Activated naive CD4-positive, alpha-beta T cell treated with anti-CD3 and anti-CD28 coated beads for 36 hours (primary cell): ENCODE measurements at regions of chr2 and their contacts with region 1.

Region 1: DNA sequence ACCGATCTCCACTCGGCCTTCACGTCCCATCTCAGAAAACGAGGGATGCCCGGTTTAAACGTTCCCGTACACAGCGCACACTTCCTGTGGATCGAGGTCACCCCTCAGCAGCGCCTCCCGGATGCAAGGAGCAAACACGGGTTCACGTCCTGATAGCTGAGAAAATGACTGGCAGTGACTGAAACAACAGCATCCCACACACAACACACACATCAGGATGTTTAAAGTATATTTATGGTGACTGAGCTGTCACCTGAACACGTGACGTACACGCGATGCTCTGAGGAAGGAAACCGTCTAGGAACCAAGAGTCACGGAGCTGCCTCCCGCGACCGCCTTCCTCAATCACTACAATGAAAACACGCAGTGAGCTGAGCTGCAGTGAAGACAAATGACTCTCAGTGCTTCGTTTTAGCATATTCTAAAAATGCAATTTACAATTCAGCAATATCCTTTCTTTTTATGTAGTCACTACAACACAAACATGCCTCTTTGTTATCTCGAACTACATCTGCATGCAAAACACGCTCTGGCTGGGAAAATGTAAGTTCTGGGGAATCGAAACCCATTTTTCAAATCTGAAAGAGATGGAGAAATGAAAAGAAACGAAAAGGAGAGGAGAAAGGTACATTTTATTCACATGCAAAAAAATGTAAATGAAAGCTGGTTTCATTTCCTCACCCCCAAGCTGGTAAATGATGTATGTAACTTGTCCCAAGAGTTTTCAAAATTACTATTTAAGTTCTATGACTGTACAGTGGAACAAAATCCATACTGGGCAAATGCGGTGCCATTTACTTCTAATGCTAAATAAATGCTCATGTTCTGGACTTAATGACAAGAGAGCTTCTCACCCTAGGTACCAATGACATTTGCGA is 19.8 kb downstream of the HDAC4 start:
- DNase-seq: peak; percentile 85
- H3K4me3 Mint-ChIP-seq: peak overlapping the region; percentile 73
- H3K27ac Mint-ChIP-seq: peak overlapping the region; percentile 95
- H3K4me1 Mint-ChIP-seq: peaks cover 44% of the 10 kb centered on the region
- H3K27me3 Mint-ChIP-seq: no peaks in the 10 kb centered on the region

Region 2: GRCh38 chr2:239216614-239217273 is 164.3 kb before region 1 on chr2:
- CTCF ChIA-PET with region 1: no interaction called
- intact Hi-C with region 1: loop called (anchors 2 kb)
- DNase-seq: peak; percentile 72
- H3K4me3 Mint-ChIP-seq: peak overlapping the region; percentile 69
- H3K27ac Mint-ChIP-seq: peak overlapping the region; percentile 87
- H3K4me1 Mint-ChIP-seq: peaks cover 71% of the 10 kb centered on the region
- H3K27me3 Mint-ChIP-seq: no peaks in the 10 kb centered on the region

Region 3: DNA sequence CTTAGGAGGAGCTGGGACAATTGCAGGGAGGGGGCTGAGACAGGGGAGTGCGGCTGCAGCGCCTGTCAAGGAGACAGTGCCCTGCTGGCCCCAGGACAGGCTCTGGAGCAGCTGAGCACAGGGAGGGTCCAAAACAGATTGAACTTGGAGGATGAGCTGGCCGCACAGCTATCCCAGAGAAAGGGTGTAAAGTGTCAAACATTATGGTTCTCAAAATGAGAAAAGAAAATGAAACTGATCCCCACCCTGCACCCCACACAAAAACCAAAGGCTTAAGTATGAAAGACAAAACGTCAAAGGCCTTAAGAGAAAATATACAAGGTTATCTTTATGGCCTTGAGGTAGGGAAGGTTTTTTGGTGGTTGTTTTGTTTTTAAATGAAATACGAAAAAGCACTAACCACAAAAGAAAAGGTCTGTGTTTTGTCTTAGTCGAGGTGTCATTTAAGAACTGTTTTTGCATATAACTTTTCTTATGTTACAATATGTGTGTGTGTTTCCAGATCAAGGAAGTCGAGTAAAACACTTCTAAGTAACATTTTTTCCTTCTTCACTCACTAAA is 92.0 kb before region 1 on chr2:
- CTCF ChIA-PET with region 1: no interaction called
- intact Hi-C with region 1: loop called (anchors 1 kb)
- DNase-seq: peak; percentile 68
- H3K4me3 Mint-ChIP-seq: peak overlapping the region; percentile 45
- H3K27ac Mint-ChIP-seq: peak overlapping the region; percentile 86
- H3K4me1 Mint-ChIP-seq: peaks cover 76% of the 10 kb centered on the region
- H3K27me3 Mint-ChIP-seq: peaks cover 13% of the 10 kb centered on the region

Region 4: DNA sequence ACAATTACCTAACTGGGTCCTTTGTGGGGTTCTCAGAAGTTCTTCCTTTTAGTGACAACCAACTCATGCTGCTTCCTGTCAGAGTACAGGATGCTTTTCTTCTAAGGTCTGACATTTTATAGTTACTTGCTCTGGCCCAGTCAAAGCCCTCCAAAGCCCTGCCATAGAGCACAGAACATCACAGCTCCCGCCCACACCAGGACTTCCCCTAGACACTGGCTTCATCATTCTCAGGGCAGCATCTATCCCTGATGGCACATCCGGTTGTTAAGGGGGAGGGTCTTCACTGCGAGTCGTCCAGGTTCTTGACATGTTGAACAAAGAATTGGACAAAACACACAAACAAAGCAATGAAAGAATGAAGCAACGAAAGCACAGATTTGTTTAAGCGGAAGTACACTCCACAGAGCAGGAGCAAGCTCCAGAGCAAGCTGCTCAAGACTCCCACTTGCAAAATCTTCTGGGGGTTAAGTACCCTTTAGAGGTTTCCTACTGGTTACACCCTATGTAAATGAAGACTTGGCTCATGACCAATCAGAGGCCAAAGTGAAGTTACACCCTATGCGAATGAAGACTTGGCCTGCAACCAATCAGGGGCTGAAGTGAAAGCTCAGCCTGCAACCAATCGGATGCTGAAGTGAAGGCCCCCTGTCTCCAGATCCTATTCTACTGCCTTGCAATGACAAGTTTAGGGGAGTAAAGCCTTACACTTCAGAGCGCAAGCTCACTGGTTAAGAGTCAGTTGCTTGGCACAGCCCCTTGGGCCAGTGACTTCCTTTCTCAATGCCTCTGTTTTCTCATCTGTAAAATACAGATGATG is 59.3 kb before region 1 on chr2:
- CTCF ChIA-PET with region 1: interaction called, 7 read pairs
- intact Hi-C with region 1: loop called (anchors 1 kb)
- DNase-seq: peak; percentile 94
- H3K4me3 Mint-ChIP-seq: peak overlapping the region; percentile 55
- H3K27ac Mint-ChIP-seq: peak overlapping the region; percentile 93
- H3K4me1 Mint-ChIP-seq: peaks cover 77% of the 10 kb centered on the region
- H3K27me3 Mint-ChIP-seq: no peaks in the 10 kb centered on the region

Region 5: DNA sequence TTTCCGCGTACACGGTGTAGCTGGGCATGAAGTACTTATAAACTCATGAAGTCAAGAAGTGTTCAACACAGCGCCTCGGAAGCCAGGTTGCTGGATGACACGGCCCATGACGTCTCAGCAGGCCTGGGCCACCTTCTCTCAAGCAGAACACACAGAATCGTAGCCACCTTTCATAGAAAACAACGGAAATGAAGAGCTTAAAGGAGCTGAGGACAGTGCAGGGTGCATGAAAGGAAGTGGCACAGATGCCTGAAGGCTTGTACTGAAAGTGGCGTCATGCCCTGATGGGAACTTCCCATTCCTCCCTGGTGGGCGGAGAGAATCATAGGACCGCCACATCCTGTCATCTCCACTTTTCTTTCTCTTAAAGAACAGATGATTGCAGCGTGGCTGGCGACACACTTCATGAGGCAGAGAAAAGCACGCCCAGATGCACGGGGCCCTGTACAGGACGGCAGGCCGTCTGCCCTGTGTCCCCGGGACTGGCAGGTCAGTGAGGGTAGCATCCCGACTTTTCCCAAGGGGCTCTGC is 11.4 kb before region 1 on chr2:
- CTCF ChIA-PET with region 1: interaction called, 14 read pairs
- intact Hi-C with region 1: loop called (anchors 1 kb)
- DNase-seq: peak; percentile 95
- H3K4me3 Mint-ChIP-seq: peak overlapping the region; percentile 76
- H3K27ac Mint-ChIP-seq: peak overlapping the region; percentile 89
- H3K4me1 Mint-ChIP-seq: peaks cover 9% of the 10 kb centered on the region
- H3K27me3 Mint-ChIP-seq: no peaks in the 10 kb centered on the region